Heart left ventricle (tissue), 16 donors: ENCODE measurements at regions of chr6 and their contacts with region 1.

Region 1: GRCh38 chr6:43386492-43386891 is 17.0 kb upstream of the ZNF318 start:
- DNase-seq: no peak
- ATAC-seq: peak in 1 of 4 donors; percentile 28
- H3K4me3 ChIP-seq: no peak overlapping the region
- H3K27ac ChIP-seq: no peak overlapping the region
- H3K4me1 ChIP-seq: peaks cover 0 to 27% (median 0%) of the 10 kb centered on the region in 12 donors
- H3K27me3 ChIP-seq: peaks cover 0 to 30% (median 2%) of the 10 kb centered on the region in 9 donors
- CTCF ChIP-seq: peak in 8 of 12 donors; percentile 18 to 66 (median 50)
- POLR2A ChIP-seq: no peak

Region 2: DNA sequence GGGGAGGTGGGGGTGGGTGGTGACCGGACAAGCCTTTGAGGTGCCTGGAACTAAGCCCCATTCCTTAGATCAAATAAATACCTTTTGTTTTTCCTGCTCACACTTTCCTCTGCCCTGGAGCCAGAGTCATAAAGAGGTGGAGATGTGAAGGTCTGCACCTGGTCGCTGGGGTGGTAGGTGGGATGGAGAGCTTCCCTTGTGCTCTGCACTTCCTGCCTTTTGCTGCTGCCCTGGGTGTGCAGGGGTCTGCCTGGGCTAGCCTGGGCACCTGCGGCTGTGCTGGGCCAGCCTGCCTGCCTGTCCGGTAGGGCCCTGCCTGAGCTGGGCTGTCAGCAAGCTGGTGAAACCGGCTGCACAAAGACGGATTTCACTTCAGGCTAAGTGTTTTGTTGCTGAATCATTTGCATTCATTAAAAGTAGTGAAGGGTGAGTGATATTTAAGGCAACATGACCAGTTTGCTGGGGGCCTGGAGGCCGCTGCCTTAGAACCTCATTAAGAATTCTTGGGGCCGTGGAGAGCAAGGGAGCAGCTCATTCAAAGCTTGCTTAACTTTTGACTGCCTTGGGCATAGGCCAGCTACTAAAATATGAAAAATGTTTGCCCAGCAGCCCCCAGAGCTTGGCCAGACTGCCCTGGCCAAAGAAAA is 289.9 kb before region 1 on chr6:
- intact Hi-C with region 1: no loop called
- DNase-seq: no peak
- ATAC-seq: peak in 1 of 4 donors; percentile 27
- H3K4me3 ChIP-seq: no peak overlapping the region
- H3K27ac ChIP-seq: no peak overlapping the region
- H3K4me1 ChIP-seq: peaks cover 0 to 20% (median 3%) of the 10 kb centered on the region in 12 donors
- H3K27me3 ChIP-seq: no peaks in the 10 kb centered on the region
- CTCF ChIP-seq: no peak
- POLR2A ChIP-seq: no peak

Region 3: DNA sequence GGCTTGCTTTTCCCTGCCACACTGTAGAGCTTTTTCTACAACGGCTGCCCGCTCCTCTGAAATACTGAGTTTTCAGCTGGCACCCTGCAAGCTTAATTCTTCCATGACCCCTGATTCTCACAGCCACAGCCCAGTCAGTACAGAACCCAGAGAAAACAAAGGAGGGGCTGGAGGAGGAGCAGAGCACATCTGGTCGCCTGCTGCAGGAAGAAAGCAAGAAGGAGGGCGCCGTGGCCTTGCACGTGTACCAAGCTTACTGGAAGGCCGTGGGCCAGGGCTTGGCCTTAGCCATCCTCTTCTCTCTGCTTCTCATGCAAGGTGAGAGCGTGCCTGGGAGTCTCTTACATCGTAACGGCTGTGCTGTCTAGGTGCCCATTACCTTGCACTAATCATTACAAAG is 57.5 kb after region 1 on chr6:
- intact Hi-C with region 1: loop called in 1 of 10 experiments (anchors 10 kb)
- DNase-seq: no peak
- ATAC-seq: no peak
- H3K4me3 ChIP-seq: no peak overlapping the region
- H3K27ac ChIP-seq: no peak overlapping the region
- H3K4me1 ChIP-seq: peaks cover 0 to under 1% (median 0%) of the 10 kb centered on the region in 12 donors
- H3K27me3 ChIP-seq: no peaks in the 10 kb centered on the region
- CTCF ChIP-seq: no peak
- POLR2A ChIP-seq: no peak

Region 4: DNA sequence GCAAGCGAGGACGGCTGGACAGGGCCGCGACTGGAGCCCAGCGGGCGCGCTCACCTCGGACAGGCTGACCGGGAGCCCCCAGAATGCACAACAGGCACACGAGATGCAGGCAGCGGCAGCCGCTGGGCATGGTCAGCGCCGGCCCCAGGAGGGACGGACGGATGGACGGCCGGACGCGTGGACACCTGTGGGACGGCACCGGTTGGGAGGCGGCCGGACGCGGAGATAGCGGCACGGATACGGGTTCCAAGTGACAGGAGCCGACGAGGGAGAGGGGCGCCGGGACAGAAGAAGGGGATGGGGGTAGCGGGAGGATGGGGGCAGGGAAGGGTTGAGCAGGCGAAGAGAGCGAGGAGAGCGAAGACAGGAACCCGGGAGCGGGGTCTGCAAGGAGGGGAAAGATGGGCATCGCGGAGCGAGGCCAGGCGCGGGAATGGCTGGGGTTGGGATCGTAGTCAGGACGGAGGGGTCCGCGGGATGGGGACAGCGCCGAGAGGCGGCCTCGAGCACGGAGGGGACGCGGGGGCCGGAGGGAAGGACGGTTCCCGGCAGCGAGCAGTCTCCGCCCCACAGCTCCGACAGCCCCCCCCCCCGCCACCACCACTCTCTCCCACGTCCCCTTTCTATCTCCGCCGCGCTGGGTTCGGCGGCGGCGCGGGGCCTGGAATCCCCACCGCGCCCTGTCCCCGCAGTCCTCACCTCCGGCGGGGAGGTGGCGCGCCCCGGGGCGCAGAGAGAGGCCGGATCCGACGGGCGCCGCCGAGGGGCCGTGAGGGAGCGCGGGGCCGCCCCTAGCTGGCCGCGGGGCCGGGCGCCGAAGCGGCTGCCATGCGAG is 68.4 kb after region 1 on chr6:
- intact Hi-C with region 1: loop called in 1 of 10 experiments (anchors 10 kb)
- DNase-seq: peak; percentile 84 to 93 (median 89)
- ATAC-seq: peak; percentile 67 to 91 (median 90)
- H3K4me3 ChIP-seq: peak overlapping the region; percentile 19 to 64 (median 54)
- H3K27ac ChIP-seq: peak overlapping the region in 2 of 12 donors; percentile 24 to 34
- H3K4me1 ChIP-seq: peaks cover 0 to 23% (median 5%) of the 10 kb centered on the region in 12 donors
- H3K27me3 ChIP-seq: peaks cover 0 to 26% (median 6%) of the 10 kb centered on the region in 9 donors
- CTCF ChIP-seq: peak in 4 of 12 donors; percentile 2 to 7 (median 4)
- POLR2A ChIP-seq: no peak

Region 5: GRCh38 chr6:43496370-43497128 is 110.1 kb after region 1 on chr6:
- intact Hi-C with region 1: loop called in 3 of 10 experiments (anchors 5 to 10 kb)
- DNase-seq: no peak
- ATAC-seq: peak in 3 of 4 donors; percentile 33 to 42 (median 33)
- H3K4me3 ChIP-seq: no peak overlapping the region
- H3K27ac ChIP-seq: peak overlapping the region in 2 of 12 donors; percentile 35 to 63
- H3K4me1 ChIP-seq: peaks cover 0 to 63% (median 46%) of the 10 kb centered on the region in 12 donors
- H3K27me3 ChIP-seq: no peaks in the 10 kb centered on the region
- CTCF ChIP-seq: peak; percentile 34 to 73 (median 63)
- POLR2A ChIP-seq: no peak

Region 6: DNA sequence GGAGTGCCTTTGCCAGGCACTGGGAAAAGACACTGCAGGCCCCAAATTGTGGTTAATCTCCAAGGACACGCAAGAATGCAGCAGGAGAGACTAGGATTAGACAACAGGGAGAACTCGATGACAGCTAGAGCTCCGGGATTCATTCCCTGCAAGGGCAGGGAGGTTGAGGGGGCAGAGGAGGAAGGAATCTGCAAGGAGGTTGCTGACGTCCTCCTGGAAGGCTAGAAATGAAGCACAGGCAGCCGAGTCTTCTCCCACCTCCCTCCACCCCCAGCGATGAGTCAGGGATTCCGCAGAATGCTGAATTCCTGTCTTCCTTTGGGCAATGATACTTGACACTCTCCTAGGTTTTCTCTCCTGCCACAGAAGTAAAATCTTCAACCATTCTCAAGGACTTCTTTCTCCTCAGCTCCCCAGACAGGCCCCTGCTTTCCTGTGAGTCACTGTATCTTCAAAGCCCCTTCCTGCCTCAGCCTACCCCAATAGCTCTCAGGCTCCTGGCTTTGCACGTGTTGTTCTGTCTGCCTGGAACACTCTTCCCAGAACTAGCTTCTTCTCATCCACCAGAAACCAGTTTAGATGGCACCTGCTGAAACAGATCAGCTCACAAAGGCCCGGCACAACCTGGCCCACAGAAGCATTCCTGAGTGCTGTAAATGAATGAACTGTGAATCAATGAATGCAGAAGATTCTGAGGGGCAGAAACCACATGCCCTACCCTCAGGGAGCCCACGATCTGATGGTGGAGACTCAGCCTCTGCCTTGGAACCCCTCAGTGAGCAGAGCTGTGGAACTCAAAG is 655.2 kb after region 1 on chr6:
- intact Hi-C with region 1: no loop called
- DNase-seq: peak in 2 of 5 donors; percentile 10 to 52
- ATAC-seq: peak in 1 of 4 donors; percentile 23
- H3K4me3 ChIP-seq: no peak overlapping the region
- H3K27ac ChIP-seq: peak overlapping the region in 2 of 12 donors; percentile 13 to 37
- H3K4me1 ChIP-seq: peaks cover 0 to 37% (median 18%) of the 10 kb centered on the region in 12 donors
- H3K27me3 ChIP-seq: no peaks in the 10 kb centered on the region
- CTCF ChIP-seq: no peak
- POLR2A ChIP-seq: no peak